ENCODE measurements at regions of chr2 and their contacts with region 1.

Region 1: DNA sequence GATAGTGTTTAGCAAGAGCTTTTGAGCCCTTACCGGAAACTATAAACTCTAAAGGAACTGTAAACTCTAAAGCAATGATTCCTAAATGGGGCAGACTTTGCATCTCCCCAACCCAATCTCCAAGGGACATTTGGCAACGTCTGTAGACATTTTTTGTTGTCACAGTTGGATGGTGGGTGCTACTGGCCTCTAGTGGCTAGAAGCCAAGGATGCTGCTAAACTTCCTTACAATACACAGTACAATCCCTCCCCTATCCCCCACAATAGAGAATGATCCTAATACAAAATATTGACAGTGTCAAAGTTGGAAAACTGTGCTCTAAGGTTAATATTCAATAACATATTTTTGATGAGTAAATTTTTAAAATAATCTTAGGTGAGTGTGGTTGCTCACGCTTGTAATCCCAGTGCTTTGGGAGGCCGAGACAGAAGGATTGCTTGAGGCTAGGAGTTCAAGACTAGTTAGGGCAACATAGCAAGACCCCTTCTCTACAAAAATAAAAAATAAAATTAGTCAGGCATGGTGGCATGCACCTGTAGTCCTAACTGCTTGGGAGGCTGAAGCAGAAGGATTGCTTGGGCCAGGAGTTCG is 66.7 kb downstream of the PTPN4 start:
- DNase-seq: peak; percentile 57
- ATAC-seq: peak; percentile 54
- H3K4me3 Mint-ChIP-seq: no peak overlapping the region
- H3K27ac Mint-ChIP-seq: no peak overlapping the region
- H3K4me1 Mint-ChIP-seq: peaks cover 37% of the 10 kb centered on the region
- H3K27me3 Mint-ChIP-seq: no peaks in the 10 kb centered on the region

Region 2: DNA sequence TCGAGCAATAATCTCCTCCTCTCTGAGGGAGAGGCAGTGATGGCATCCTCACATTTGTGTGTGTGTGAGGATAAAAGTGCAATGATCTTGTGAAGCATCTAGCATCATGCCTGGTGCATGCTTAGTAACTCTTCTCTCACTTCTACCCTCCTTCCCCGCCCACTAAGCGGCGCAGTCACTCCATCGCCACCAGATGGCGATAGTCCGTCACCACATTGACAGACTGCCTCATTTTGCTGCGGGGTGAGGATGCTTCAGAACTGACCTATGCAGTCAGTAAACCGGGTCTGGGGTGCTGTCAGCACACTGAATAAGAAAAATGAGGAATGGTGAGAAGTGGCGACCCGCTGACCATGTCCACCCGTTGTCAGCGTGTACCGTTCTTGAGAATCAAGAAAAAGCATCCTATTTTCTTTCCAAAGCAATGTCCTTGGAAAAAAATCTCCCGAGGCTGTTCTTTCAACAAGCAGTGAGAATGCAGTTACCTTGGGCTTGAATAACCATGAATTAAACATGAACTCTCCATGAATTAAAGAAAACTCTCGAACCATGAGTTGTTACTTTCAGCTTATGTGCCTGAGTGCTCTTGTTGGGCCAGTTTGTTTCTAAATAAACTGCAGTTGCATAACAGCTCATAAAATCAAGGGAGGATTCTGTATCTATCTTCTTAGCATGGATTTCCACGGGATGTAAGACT is 184.8 kb before region 1 on chr2:
- CTCF ChIA-PET with region 1: interaction called, 6 read pairs
- POLR2A ChIA-PET with region 1: no interaction called
- intact Hi-C with region 1: loop called (anchors 1 to 5 kb)
- DNase-seq: peak; percentile 87
- ATAC-seq: peak; percentile 99
- H3K4me3 Mint-ChIP-seq: no peak overlapping the region
- H3K27ac Mint-ChIP-seq: no peak overlapping the region
- H3K4me1 Mint-ChIP-seq: peaks cover 2% of the 10 kb centered on the region
- H3K27me3 Mint-ChIP-seq: no peaks in the 10 kb centered on the region

Region 3: DNA sequence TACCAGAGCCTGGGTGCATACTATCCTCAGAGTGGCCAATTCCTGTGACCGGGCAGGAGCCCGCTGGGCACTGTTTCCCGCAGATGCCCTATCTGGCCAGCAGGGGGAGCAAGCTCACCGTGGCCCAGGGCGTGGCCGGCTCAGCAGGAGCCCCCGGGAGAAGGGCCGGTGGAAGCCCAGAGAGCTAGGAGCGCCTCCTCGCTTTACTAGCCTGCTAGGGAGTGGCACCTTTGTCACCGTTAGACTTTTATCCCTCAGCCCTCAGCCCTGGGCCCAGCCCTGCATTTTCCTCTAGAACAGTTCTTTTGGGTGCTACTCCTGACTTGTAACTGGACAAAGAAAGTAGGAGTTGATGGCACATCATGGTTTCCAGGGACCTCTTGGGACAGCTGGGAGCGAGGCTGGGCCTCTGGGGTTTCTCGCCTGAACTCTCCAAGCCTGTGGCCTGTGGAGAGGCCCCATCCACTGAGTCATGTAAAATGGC is 123.5 kb before region 1 on chr2:
- CTCF ChIA-PET with region 1: interaction called, 8 read pairs
- POLR2A ChIA-PET with region 1: no interaction called
- intact Hi-C with region 1: loop called (anchors 1 kb)
- DNase-seq: peak; percentile 82
- ATAC-seq: peak; percentile 81
- H3K4me3 Mint-ChIP-seq: no peak overlapping the region
- H3K27ac Mint-ChIP-seq: no peak overlapping the region
- H3K4me1 Mint-ChIP-seq: peaks cover 21% of the 10 kb centered on the region
- H3K27me3 Mint-ChIP-seq: no peaks in the 10 kb centered on the region

Region 4: DNA sequence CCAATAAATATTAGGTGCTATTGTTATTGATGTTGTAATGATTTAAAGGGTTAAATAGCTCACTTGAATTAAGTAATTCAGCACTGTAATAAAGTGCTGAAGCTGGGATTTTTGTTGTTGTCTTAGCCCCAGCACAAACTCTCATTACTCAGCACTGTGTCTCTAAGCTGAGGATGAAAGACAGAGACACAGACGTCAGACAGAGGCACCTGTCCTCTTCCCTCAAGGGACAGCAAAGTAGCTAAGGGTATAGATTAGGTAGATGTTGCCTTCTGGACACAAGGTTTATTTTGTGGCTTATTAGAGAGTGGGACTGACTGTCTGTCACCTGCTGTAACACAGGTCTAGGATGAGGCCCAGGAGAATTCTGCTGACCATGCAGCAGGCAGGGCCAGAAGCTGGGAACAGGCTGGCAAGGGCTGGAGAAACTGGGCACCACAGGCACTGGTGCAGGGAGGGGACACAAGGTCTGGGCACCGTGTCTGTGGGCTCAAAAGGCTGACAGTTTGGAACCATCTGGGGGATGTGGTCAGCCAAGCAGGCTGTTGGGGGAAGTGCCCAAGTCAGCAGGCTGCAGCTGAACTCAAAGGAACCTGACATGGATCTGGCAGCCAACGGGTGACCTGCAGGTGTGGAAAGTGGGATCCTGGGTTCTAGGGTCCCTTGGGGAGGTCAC is 86.7 kb before region 1 on chr2:
- CTCF ChIA-PET with region 1: no interaction called
- POLR2A ChIA-PET with region 1: no interaction called
- intact Hi-C with region 1: no loop called
- DNase-seq: no peak
- ATAC-seq: no peak
- H3K4me3 Mint-ChIP-seq: no peak overlapping the region
- H3K27ac Mint-ChIP-seq: no peak overlapping the region
- H3K4me1 Mint-ChIP-seq: peaks cover 4% of the 10 kb centered on the region
- H3K27me3 Mint-ChIP-seq: no peaks in the 10 kb centered on the region

Region 5: DNA sequence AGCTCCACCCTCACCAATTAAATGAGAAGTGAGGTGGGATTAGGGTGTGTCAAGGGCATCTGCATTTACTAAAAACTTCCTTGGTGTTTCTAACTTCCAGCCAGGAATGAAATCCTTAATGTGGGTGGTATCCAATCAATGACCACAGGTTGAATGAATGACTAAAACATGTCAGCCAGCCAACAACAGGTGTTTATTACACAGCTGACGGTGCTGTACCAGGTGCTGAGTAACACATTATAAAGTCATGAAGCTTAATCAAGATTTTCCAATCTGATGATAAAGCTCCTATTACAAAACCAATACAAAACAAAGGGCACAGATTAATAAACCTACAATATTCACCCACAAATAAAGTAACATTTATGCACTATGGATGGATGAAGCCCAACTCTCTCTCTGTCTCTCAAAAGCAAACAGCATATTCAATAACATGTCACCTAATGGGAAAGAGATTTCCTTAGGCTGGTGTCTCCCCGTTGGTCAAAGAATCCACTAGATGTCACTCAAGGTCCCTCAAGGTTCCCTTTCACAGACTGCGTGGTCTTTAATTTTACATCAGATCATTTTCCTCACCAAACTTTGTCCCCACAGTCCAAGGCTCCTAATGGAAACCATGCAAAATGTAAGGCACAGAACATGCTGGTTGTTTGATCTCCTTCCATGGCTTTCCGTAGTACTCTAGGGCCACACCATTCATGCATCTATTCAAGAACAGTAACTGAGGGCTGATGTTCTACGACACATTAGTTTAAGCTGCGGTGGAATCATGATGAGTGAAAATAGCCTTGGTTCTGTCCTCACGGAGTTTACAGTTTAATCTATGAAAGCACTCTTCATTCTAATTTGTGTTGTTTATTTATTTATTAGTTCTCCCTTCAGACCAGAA is 73.2 kb before region 1 on chr2:
- CTCF ChIA-PET with region 1: interaction called, 17 read pairs
- POLR2A ChIA-PET with region 1: no interaction called
- intact Hi-C with region 1: loop called (anchors 1 kb)
- DNase-seq: peak; percentile 32
- ATAC-seq: peak; percentile 65
- H3K4me3 Mint-ChIP-seq: no peak overlapping the region
- H3K27ac Mint-ChIP-seq: no peak overlapping the region
- H3K4me1 Mint-ChIP-seq: peaks cover 15% of the 10 kb centered on the region
- H3K27me3 Mint-ChIP-seq: no peaks in the 10 kb centered on the region

Measured in activated CD4-positive, alpha-beta T cell treated with anti-CD3 and anti-CD28 coated beads for 36 hours (primary cell).